ENCODE measurements at regions of chr9 and their contacts with region 1.

Region 1: GRCh38 chr9:121634329-121635261 is 16.8 kb upstream of the DAB2IP start:
- DNase-seq: peak in 2 of 10 donors; percentile 38 to 55
- H3K4me3 ChIP-seq: no peak overlapping the region
- H3K27ac ChIP-seq: peak overlapping the region in 20 of 59 donors; percentile 8 to 97 (median 90)
- H3K27me3 ChIP-seq: no peaks in the 10 kb centered on the region
- CTCF ChIP-seq: peak in 54 of 56 donors; percentile 33 to 77 (median 62)

Region 2: GRCh38 chr9:121686930-121687541 is 52.4 kb after region 1 on chr9:
- intact Hi-C with region 1: loop called (anchors 2 to 5 kb)
- DNase-seq: peak; percentile 72 to 85 (median 78)
- H3K4me3 ChIP-seq: no peak overlapping the region
- H3K27ac ChIP-seq: peak overlapping the region in 13 of 59 donors; percentile 4 to 71 (median 32)
- H3K27me3 ChIP-seq: no peaks in the 10 kb centered on the region
- CTCF ChIP-seq: peak; percentile 39 to 96 (median 86)

Region 3: DNA sequence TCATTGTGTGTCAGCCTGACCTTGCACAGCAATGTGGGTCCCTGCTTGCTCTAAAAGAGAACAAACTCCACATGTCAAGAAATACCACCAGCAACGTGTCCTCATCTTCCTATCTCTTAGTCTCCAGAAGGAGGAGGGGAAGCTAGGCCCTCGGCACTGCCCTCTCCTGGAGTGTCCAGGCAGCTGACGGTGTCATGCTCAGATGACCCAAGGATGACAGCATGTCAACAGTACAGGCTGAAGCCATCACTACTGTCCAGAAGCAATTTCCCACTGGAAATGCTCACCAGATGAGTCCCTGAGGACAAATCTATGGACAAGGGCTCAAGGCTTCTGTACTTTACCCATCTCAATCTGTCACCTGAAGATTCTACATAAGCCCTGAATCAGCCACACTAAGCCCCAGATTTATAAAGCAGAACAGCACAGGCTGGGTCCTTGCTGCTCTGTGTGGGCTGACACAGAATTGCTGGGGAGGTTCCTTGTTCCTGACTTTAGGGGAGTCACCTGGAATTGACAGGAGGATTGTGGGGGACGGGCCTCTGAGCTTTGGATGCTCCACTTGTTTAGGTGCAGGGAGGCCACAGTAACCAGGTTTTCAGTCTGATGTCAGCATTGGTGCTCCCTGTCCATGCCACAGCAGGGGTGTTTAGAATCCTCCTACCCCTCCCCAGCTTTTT is 227.0 kb after region 1 on chr9:
- intact Hi-C with region 1: loop called in 1 of 2 experiments (anchors 10 kb)
- DNase-seq: peak in 6 of 10 donors; percentile 42 to 64 (median 57)
- H3K4me3 ChIP-seq: no peak overlapping the region
- H3K27ac ChIP-seq: peak overlapping the region in 22 of 59 donors; percentile 4 to 71 (median 44)
- H3K27me3 ChIP-seq: no peaks in the 10 kb centered on the region
- CTCF ChIP-seq: peak in 53 of 56 donors; percentile 21 to 73 (median 53)